ENCODE measurements at regions of chr3 and their contacts with region 1.

Region 1: DNA sequence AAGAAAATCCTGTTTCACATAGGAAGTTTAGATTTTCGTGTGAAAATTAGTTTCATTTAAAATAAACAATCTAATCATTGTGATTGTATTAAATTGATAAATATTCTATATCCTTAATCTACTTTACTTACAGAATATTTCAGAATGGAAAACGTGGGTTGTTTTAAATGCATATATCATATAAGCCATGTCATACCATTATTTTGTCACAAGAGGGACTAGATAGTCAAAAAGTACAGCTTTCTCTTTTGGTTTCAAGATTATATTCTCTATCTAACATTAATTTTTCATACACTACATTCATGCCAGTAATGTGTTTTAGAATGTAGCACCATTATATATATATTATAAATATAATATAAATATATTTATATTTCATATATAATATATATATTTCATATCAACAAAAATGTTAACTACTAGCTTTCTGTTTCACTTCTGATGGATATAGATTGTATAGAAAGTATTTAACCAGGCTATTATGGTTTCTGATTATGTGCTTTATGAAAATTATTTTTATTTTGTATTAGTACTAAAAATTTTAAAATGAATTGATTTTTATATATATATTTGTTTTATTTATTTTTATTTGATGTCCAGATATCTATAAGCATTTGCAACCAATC is 45.3 kb downstream of the OSTN start:
- DNase-seq: peak; percentile 34
- CTCF ChIP-seq: peak; percentile 11

Region 2: GRCh38 chr3:191290311-191291025 is 46.1 kb after region 1 on chr3:
- in situ Hi-C with region 1: loop called (anchors 5 kb)
- DNase-seq: peak; percentile 54
- CTCF ChIP-seq: no peak

Region 3: GRCh38 chr3:191329654-191330528 is 85.5 kb after region 1 on chr3 and contains the start of gene UTS2B:
- in situ Hi-C with region 1: loop called (anchors 10 kb)
- DNase-seq: no peak
- CTCF ChIP-seq: no peak